ENCODE measurements at regions of chr13 and their contacts with region 1.

Region 1: GRCh38 chr13:72716776-72717175 is 10.7 kb downstream of the MZT1 start:
- DNase-seq: no peak
- ATAC-seq: no peak
- H3K4me3 ChIP-seq: no peak overlapping the region
- H3K4me3 Mint-ChIP-seq: no peak overlapping the region
- H3K27ac ChIP-seq: no peak overlapping the region
- H3K27ac Mint-ChIP-seq: no peak overlapping the region
- H3K4me1 ChIP-seq: no peaks in the 10 kb centered on the region
- H3K4me1 Mint-ChIP-seq: peaks cover 28% of the 10 kb centered on the region
- H3K27me3 ChIP-seq: no peaks in the 10 kb centered on the region
- H3K27me3 Mint-ChIP-seq: no peaks in the 10 kb centered on the region
- CTCF ChIP-seq: no peak

Region 2: GRCh38 chr13:71303144-71303543 is 1413.6 kb before region 1 on chr13:
- CTCF ChIA-PET with region 1: no interaction called
- POLR2A ChIA-PET with region 1: no interaction called
- intact Hi-C with region 1: loop called in 1 of 2 experiments (anchors 10 kb)
- DNase-seq: no peak
- ATAC-seq: no peak
- H3K4me3 ChIP-seq: no peak overlapping the region
- H3K4me3 Mint-ChIP-seq: no peak overlapping the region
- H3K27ac ChIP-seq: no peak overlapping the region
- H3K27ac Mint-ChIP-seq: no peak overlapping the region
- H3K4me1 ChIP-seq: no peaks in the 10 kb centered on the region
- H3K4me1 Mint-ChIP-seq: no peaks in the 10 kb centered on the region
- H3K27me3 ChIP-seq: no peaks in the 10 kb centered on the region
- H3K27me3 Mint-ChIP-seq: peaks cover 6% of the 10 kb centered on the region
- CTCF ChIP-seq: no peak

Region 3: DNA sequence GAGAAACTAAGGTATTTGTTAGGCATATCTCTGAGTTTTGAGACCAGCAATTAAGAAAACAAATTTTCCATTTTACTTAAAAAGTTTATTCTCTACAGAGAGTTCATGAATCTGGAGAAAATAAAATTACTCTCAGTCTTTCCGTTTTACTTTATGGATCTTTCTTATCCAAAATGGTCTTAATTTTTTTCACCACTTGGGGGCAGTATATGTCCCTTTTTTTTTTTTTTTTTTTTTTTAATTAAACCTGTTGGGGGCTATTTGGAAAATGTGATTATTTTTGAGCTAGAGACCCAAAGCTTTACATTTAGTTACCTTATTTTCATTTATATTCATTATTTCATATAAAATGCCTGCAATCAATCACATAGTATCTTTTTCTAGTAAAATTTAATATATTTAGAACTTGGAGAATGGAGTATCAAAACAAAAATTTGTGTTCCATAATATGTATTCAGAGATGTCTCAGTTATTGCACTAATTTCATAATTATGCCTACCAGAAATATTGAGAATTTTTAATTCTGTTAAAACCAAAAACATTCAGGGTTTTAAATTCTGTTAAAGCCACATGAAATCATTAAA is 92.2 kb after region 1 on chr13:
- CTCF ChIA-PET with region 1: no interaction called
- POLR2A ChIA-PET with region 1: no interaction called
- intact Hi-C with region 1: no loop called
- DNase-seq: peak in 2 of 9 experiments; percentile 41 to 57
- ATAC-seq: peak; percentile 36
- H3K4me3 ChIP-seq: no peak overlapping the region
- H3K4me3 Mint-ChIP-seq: no peak overlapping the region
- H3K27ac ChIP-seq: no peak overlapping the region
- H3K27ac Mint-ChIP-seq: no peak overlapping the region
- H3K4me1 ChIP-seq: no peaks in the 10 kb centered on the region
- H3K4me1 Mint-ChIP-seq: peaks cover 4% of the 10 kb centered on the region
- H3K27me3 ChIP-seq: no peaks in the 10 kb centered on the region
- H3K27me3 Mint-ChIP-seq: no peaks in the 10 kb centered on the region
- CTCF ChIP-seq: peak; percentile 89

Measured in CD8-positive, alpha-beta T cell (primary cell).